ENCODE measurements at regions of chr3 and their contacts with region 1.

Region 1: DNA sequence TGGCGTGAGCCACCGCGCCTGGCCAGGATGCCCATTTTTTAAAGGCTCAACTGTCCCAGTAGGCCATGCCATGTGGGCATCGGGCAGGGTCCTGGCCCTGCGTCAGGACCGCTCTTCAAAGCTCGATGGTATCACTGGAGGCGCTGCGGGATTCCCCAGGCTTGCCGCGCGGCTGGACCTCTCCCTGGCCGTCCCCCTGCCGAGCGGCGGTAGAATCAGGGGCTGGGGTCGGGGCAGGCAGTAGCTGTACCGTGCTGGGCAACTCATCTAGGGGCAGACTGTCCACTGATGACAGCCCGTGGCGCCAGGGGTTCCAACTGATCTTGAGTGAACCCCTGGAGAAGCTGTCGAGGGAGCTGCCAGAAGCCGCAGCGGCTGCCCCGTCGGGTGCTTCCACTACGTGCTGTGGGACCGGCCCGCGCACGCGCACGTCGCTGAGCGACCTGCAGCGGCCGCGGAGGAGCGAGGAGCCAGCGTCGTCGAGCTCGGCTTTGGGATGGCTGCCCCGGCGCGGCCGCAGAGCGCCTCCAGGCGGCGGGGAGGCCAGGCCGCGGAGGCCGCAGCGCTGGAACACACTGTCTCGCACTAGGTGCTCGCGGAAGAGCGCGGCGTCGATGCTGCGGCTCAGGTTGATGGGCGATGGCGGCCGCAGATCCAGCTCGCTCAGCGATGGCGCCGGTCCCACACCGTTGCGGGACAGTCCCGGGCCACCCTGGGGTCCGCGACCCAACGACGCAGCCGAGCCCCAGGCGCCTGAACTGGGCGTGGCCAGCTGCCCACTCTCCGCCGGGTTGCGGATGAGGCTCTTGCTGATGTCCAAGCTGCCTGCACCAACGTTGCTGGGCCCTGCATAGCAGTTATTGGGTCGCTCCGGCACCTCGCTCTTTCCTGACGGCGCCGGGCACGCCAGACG is 5.8 kb downstream of the PRRT3 start:
- DNase-seq: peak; percentile 79
- H3K4me3 ChIP-seq: peak overlapping the region; percentile 31 to 44
- H3K27ac ChIP-seq: peak overlapping the region; percentile 77 to 81
- H3K4me1 ChIP-seq: no peaks in the 10 kb centered on the region
- H3K27me3 ChIP-seq: no peaks in the 10 kb centered on the region
- CTCF ChIP-seq: peak; percentile 43 to 93 (median 66)
- POLR2A ChIP-seq: peak; percentile 55

Region 2: GRCh38 chr3:9715764-9716437 is 230.5 kb before region 1 on chr3:
- intact Hi-C with region 1: loop called (anchors 2 kb)
- DNase-seq: peak; percentile 85
- H3K4me3 ChIP-seq: no peak overlapping the region
- H3K27ac ChIP-seq: peak overlapping the region; percentile 21 to 38
- H3K4me1 ChIP-seq: no peaks in the 10 kb centered on the region
- H3K27me3 ChIP-seq: no peaks in the 10 kb centered on the region
- CTCF ChIP-seq: peak; percentile 37 to 92 (median 84)
- POLR2A ChIP-seq: no peak

Region 3: DNA sequence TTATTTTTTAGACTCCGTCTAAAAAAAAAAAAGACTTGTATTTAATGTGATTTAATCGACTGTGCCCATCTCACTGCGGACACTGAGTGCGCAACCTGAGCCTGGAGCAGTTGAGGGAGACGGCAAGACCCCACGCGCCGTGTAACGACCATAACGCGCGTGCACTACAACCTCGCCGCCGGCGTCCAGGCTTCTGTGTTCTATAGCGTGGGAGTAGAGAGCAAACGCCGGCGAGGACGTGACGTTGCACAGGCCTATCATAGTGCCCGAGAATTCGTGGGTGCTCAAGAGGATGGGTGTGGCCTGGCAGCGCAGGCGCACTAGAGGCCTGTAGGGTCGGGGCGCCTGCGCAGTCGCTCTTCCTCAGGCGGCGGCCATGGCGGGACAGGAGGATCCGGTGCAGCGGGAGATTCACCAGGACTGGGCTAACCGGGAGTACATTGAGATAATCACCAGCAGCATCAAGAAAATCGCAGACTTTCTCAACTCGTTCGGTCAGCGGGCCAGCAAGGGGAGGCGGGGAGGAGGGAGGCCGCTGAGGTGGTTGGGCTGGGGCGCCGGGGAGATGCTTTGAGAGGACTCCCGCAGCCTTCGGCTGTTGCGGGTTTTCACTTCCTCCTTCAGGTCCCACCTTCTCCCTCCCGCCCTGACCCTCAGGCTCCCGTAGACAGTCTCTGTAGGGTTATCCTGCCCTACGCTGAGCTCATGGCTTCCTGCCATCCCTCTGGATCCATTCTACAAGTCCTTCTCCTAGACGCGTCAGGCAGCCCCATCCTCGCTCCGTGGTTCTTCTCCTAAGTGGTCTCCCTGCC is 169.2 kb after region 1 on chr3 and contains the start of gene BRK1:
- intact Hi-C with region 1: loop called (anchors 10 kb)
- DNase-seq: peak; percentile 94
- H3K4me3 ChIP-seq: peak within 1 kb of the TSS; percentile 75 to 84
- H3K27ac ChIP-seq: peak within 1 kb of the TSS; percentile 68 to 74
- H3K4me1 ChIP-seq: no peaks in the 10 kb centered on the region
- H3K27me3 ChIP-seq: no peaks in the 10 kb centered on the region
- CTCF ChIP-seq: peak in 2 of 4 experiments; percentile 21 to 27
- POLR2A ChIP-seq: peak; percentile 83
- total RNA-seq, gene BRK1: 118 to 126 TPM

Region 4: DNA sequence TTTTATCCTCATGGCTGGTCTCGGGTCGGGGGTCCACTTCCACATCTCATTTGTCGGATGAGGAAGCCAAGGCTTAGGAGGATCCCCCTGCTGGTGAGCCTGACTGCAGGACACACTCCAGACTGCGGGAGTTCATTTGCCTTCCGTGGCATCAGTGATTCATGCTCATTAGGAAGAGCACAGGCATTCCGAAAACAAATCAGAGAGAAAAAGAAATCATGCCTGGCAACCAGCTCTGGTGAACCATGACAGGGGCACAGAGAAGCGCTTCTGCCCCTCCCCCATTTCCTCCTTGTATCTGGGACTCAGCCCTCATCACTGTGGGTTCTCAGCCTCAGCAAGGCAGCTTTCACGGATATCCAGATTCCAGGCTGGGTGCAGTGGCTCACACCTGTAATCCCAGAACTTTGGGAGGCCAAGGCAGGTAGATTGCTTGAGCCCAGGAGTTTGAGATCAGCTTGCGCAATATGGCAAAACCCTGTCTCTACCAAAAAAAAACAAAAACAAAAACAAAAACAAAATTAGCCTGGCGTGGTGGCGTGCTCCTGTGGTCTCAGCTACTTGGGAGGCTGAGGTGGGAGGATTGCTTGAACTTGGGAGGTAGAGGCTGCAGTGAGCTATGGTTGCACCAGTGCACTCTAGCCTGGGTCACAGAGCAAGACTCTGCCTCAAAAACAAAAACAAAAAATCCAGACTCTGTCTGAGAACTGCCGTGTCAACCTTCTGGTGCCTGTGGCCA is 246.8 kb after region 1 on chr3:
- intact Hi-C with region 1: no loop called
- DNase-seq: no peak
- H3K4me3 ChIP-seq: no peak overlapping the region
- H3K27ac ChIP-seq: peak overlapping the region; percentile 78 to 83
- H3K4me1 ChIP-seq: peaks cover 40% of the 10 kb centered on the region
- H3K27me3 ChIP-seq: no peaks in the 10 kb centered on the region
- CTCF ChIP-seq: no peak
- POLR2A ChIP-seq: no peak